CD4-positive, alpha-beta T cell (primary cell): ENCODE measurements at regions of chr3 and their contacts with region 1.

Region 1: DNA sequence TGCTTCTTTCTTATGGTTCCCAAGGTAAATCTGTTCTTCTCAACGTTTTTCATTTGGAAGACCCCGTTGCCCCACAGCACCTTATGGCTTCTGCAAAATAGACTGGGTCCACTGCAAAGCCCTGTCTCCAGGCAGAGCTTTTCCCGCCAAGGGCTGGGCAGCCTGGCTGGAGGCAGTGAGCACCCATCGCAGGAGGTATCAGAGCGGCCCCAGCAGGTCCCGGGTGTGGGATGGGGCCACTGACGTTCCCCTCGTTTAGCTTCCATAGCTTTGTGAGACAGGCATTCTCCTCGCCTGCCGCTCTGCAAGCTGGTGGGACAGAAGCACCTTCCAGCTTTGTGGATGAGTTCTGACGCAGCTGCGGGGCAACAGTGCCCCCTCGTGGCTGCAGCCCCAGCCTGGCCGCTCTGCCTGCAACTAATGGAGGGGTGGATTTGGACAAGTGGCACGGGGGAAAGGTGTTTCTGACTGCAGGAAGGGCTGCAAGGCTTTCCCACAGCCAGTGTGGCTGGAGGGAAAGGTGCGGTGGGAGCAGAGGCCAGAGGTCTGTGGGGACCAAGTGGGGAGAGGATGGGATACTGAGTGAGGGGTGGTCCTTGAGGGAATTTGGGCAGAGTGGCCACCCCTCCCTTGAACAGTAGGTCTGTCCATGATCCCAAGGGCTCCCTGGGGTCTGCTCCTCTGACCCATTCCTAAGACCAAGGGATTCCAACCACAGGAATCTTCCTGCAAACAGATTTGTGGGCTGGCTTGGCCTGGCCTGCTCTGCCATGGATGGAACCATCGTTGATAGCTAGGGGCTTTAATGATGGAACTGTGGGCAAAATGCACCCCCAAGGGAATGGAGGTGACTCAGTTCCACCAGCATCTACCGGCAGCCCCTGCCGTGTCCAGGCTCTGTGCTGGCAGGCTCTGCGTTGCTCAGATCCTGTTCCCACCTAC is 99.4 kb downstream of the FBLN2 start:
- DNase-seq: peak; percentile 54 to 88 (median 73)
- ATAC-seq: peak; percentile 38
- H3K4me3 ChIP-seq: no peak overlapping the region
- H3K4me3 Mint-ChIP-seq: no peak overlapping the region
- H3K27ac ChIP-seq: no peak overlapping the region
- H3K27ac Mint-ChIP-seq: no peak overlapping the region
- H3K4me1 ChIP-seq: peaks cover 46% of the 10 kb centered on the region
- H3K4me1 Mint-ChIP-seq: peaks cover 51% of the 10 kb centered on the region
- H3K27me3 ChIP-seq: peaks cover 10 to 12% of the 10 kb centered on the region in 2 experiments
- H3K27me3 Mint-ChIP-seq: peaks cover 34% of the 10 kb centered on the region
- CTCF ChIP-seq: peak; percentile 95

Region 2: DNA sequence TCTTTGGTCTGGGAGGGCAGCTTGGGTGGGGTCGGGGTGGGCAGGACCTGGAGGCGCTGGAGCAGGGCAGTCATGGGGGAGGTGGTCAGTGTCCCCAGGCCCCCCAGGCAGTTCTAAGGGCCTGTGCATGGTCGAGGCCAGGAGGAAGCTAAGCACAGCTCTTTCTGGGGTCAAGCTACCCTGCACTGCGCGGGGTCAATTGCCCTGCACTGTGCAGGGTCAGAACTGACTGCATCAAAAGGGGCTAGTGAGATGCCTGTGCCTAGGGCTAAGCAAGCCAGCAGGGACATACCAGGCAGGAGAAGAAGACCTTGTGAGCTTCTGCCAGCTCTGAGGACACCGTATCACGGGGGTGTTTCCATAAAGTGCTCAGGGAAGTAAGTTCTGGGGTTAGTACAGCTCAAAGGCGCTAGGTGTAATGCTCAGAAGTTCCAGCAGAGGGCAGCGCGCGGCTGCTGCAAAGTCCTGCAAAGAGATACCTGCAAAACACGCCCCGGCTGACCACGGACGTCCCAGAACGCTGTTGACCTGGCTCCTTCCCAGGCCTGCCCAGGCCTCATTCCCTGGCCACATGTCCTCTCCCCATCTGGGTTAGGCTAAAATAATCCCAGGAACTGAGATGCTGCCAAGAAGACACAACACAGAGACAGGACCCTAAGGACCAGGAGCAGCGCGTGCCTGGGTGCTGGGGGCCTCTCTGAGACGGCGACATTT is 556.3 kb before region 1 on chr3:
- CTCF ChIA-PET with region 1: interaction called, 11 read pairs
- POLR2A ChIA-PET with region 1: interaction called, 3 read pairs
- intact Hi-C with region 1: loop called (anchors 1 kb)
- DNase-seq: peak; percentile 63 to 88 (median 78)
- ATAC-seq: peak; percentile 93
- H3K4me3 ChIP-seq: no peak overlapping the region
- H3K4me3 Mint-ChIP-seq: no peak overlapping the region
- H3K27ac ChIP-seq: no peak overlapping the region
- H3K27ac Mint-ChIP-seq: no peak overlapping the region
- H3K4me1 ChIP-seq: peaks cover 8% of the 10 kb centered on the region
- H3K4me1 Mint-ChIP-seq: peaks cover 6% of the 10 kb centered on the region
- H3K27me3 ChIP-seq: peaks cover 0 to 3% of the 10 kb centered on the region in 2 experiments
- H3K27me3 Mint-ChIP-seq: peaks cover 18% of the 10 kb centered on the region
- CTCF ChIP-seq: peak; percentile 94

Region 3: GRCh38 chr3:13495921-13496723 is 152.2 kb before region 1 on chr3:
- CTCF ChIA-PET with region 1: interaction called, 54 read pairs
- POLR2A ChIA-PET with region 1: interaction called, 11 read pairs
- intact Hi-C with region 1: loop called (anchors 1 kb)
- DNase-seq: peak; percentile 48 to 81 (median 60)
- ATAC-seq: peak; percentile 100
- H3K4me3 ChIP-seq: no peak overlapping the region
- H3K4me3 Mint-ChIP-seq: no peak overlapping the region
- H3K27ac ChIP-seq: no peak overlapping the region
- H3K27ac Mint-ChIP-seq: no peak overlapping the region
- H3K4me1 ChIP-seq: no peaks in the 10 kb centered on the region
- H3K4me1 Mint-ChIP-seq: no peaks in the 10 kb centered on the region
- H3K27me3 ChIP-seq: no peaks in the 10 kb centered on the region
- H3K27me3 Mint-ChIP-seq: no peaks in the 10 kb centered on the region
- CTCF ChIP-seq: peak; percentile 91

Region 4: GRCh38 chr3:14124615-14125190 is 476.4 kb after region 1 on chr3 and contains the starts of genes CHCHD4 and TMEM43:
- CTCF ChIA-PET with region 1: no interaction called
- POLR2A ChIA-PET with region 1: no interaction called
- intact Hi-C with region 1: loop called in 1 of 2 experiments (anchors 10 kb)
- DNase-seq: peak; percentile 94 to 100 (median 98)
- ATAC-seq: peak; percentile 89
- H3K4me3 ChIP-seq: peak within 1 kb of the TSS; percentile 96
- H3K4me3 Mint-ChIP-seq: peak within 1 kb of the TSS; percentile 97
- H3K27ac ChIP-seq: peak within 1 kb of the TSS; percentile 76 to 86
- H3K27ac Mint-ChIP-seq: peak within 1 kb of the TSS; percentile 91
- H3K4me1 ChIP-seq: peaks cover 53% of the 10 kb centered on the region
- H3K4me1 Mint-ChIP-seq: peaks cover 73% of the 10 kb centered on the region
- H3K27me3 ChIP-seq: no peaks in the 10 kb centered on the region
- H3K27me3 Mint-ChIP-seq: no peaks in the 10 kb centered on the region
- CTCF ChIP-seq: no peak
- total RNA-seq, gene CHCHD4: 0.50 to 1.1 TPM
- total RNA-seq, gene TMEM43: 24.8 to 27.6 TPM